Mammary epithelial cell (primary cell): ENCODE measurements at regions of chr14 and their contacts with region 1.

Region 1: DNA sequence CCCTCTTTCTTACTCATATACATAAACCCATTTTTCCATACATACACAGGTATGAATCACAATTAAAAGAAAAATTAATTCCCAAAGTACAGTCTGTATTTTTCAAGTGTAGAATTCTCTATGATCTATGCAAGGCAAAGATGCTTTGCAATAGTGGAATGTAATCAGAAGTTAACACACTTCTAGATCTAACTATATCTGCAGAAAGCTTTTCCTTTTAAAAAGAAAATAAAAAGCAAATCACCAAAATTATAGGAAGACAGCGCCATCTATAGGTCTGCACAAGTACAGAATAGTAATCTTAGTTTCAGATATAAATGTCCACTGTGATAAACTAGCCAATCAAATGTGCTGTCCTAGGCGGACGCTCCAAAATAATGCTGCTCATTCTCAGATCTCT is 22.0 kb downstream of the SLC25A21 start:
- DNase-seq: peak; percentile 36
- H3K4me3 ChIP-seq: no peak overlapping the region
- H3K27ac ChIP-seq: no peak overlapping the region
- H3K4me1 ChIP-seq: peaks cover 2% of the 10 kb centered on the region
- H3K27me3 ChIP-seq: no peaks in the 10 kb centered on the region
- CTCF ChIP-seq: peak; percentile 65 to 68

Region 2: DNA sequence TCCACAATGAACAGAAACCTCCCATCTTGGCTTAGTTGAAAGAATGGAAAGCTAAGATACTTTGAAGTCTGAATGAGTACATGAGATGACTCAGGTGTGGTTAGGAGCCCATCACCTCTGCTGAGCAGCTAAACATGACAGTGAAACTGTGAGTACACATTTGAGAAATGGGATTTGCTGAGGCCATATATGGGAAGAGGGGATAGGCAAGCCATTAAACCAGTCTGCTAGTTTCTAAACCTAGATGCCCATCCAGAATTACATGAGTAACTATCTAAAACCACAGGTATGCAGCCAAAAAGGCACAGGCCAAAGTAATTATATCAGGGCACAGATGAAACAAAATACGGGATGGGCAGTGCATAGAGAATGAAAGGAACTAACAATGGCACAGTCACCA is 671.6 kb before region 1 on chr14:
- CTCF ChIA-PET with region 1: interaction called, 10 read pairs
- dilution Hi-C with region 1: no loop called
- in situ Hi-C with region 1: no loop called
- intact Hi-C with region 1: no loop called
- DNase-seq: peak; percentile 92
- H3K4me3 ChIP-seq: no peak overlapping the region
- H3K27ac ChIP-seq: no peak overlapping the region
- H3K4me1 ChIP-seq: no peaks in the 10 kb centered on the region
- H3K27me3 ChIP-seq: no peaks in the 10 kb centered on the region
- CTCF ChIP-seq: no peak